ENCODE measurements at regions of chr6 and their contacts with region 1.

Region 1: DNA sequence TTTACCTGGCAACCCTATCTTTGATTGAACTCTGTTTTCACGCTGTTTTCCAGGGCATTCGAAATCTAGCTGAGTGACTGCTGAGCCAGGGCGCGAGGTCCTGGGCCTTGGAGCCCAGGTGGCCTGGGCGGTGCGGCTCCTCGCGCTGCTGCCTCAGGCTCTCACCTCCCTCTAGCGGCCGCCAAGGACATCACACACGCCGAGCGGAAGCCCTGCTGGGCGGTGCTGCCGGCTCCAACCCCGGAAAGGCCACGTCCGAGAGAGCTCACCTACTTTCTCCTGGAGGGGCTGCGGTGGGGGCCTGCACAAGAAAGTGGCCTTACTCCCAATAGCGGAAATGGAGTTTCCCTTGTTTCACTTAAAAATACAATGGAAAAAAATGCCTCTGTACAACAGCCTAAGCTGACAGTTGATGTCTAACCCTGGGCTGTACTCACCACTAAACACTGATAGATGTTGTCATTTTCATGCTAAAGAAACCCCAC is 77.7 kb downstream of the ELOVL4 start:
- DNase-seq: peak; percentile 82
- H3K4me3 ChIP-seq: peak overlapping the region; percentile 22 to 31; a peak in 2 of 4 replicates
- H3K27ac ChIP-seq: no peak overlapping the region
- H3K4me1 ChIP-seq: peaks cover 0 to 14% of the 10 kb centered on the region in 2 experiments; a peak in 2 of 4 replicates
- H3K27me3 ChIP-seq: no peaks in the 10 kb centered on the region
- CTCF ChIP-seq: peak; percentile 82
- EP300 ChIP-seq: peak in 1 of 2 experiments; percentile 5; a peak in 1 of 4 replicates
- RAD21 ChIP-seq: peak; percentile 76

Region 2: DNA sequence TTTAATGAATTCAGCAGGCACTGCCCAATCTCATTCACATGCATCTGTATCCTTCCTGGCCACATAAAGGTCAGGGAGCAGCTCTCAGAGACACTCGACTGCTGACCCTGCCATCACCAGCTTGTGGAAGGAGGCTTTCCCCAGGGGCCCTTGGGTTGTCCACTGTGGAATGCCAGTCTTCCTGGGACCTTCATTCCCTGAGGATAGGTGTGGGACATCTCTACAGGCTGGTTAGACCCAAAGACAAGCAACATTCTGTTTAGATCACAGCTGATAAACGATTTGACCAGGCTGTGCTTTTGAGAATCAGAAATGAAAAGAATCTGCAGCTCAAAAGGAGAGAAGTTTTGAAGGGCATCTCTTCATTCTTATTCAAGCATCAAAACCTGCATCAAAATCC is 256.8 kb before region 1 on chr6:
- CTCF ChIA-PET with region 1: interaction called, 10 read pairs
- POLR2A ChIA-PET with region 1: no interaction called
- DNase-seq: no peak
- H3K4me3 ChIP-seq: no peak overlapping the region
- H3K27ac ChIP-seq: peak overlapping the region in 1 of 2 experiments; percentile 86; a peak in 2 of 4 replicates
- H3K4me1 ChIP-seq: peaks cover 0 to 37% of the 10 kb centered on the region in 2 experiments; a peak in 2 of 4 replicates
- H3K27me3 ChIP-seq: no peaks in the 10 kb centered on the region
- CTCF ChIP-seq: no peak
- EP300 ChIP-seq: no peak
- RAD21 ChIP-seq: no peak

Region 3: GRCh38 chr6:79762370-79762769 is 107.3 kb before region 1 on chr6:
- CTCF ChIA-PET with region 1: interaction called, 21 read pairs
- POLR2A ChIA-PET with region 1: no interaction called
- DNase-seq: no peak
- H3K4me3 ChIP-seq: no peak overlapping the region
- H3K27ac ChIP-seq: no peak overlapping the region
- H3K4me1 ChIP-seq: no peaks in the 10 kb centered on the region; a peak in 1 of 4 replicates
- H3K27me3 ChIP-seq: no peaks in the 10 kb centered on the region
- CTCF ChIP-seq: peak; percentile 30; the same call in 1 of the 2 replicates
- EP300 ChIP-seq: no peak
- RAD21 ChIP-seq: peak; percentile 56

Region 4: GRCh38 chr6:79813854-79814709 is 55.6 kb before region 1 on chr6:
- CTCF ChIA-PET with region 1: interaction called, 42 read pairs
- POLR2A ChIA-PET with region 1: no interaction called
- DNase-seq: peak; percentile 68
- H3K4me3 ChIP-seq: no peak overlapping the region; a peak in 1 of 4 replicates
- H3K27ac ChIP-seq: peak overlapping the region in 1 of 2 experiments; percentile 100; a peak in 2 of 4 replicates
- H3K4me1 ChIP-seq: peaks cover 0 to 48% of the 10 kb centered on the region in 2 experiments; a peak in 3 of 4 replicates
- H3K27me3 ChIP-seq: no peaks in the 10 kb centered on the region
- CTCF ChIP-seq: peak; percentile 94
- EP300 ChIP-seq: peak in 1 of 2 experiments; percentile 34; a peak in 1 of 4 replicates
- RAD21 ChIP-seq: peak; percentile 98

Region 5: DNA sequence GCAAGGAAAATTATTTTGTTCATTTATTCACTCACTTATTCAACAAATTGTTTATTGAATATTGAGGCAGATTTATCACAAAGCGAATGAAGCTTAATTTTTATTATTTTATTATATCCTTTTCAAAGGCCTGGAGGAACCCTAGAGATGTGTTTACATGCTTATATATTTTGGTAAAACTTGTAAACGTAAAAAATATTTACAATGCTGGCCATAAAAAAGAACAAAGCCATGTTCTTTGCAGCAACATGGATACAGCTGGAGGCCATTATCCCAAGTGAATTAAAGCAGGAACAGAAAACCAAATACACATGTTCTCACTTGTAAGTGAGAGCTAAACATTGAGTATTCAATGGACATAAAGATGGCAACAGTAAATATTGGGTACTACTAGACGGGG is 18.9 kb after region 1 on chr6:
- CTCF ChIA-PET with region 1: interaction called, 12 read pairs
- POLR2A ChIA-PET with region 1: no interaction called
- DNase-seq: no peak
- H3K4me3 ChIP-seq: no peak overlapping the region
- H3K27ac ChIP-seq: no peak overlapping the region
- H3K4me1 ChIP-seq: no peaks in the 10 kb centered on the region
- H3K27me3 ChIP-seq: no peaks in the 10 kb centered on the region
- CTCF ChIP-seq: no peak
- EP300 ChIP-seq: no peak
- RAD21 ChIP-seq: no peak